PC-3 (cell line): ENCODE measurements at regions of chr22 and their contacts with region 1.

Region 1: GRCh38 chr22:46057762-46058420 is 80.9 kb upstream of the WNT7B start:
- DNase-seq: peak; percentile 84
- ATAC-seq: peak; percentile 31
- H3K4me3 ChIP-seq: peak overlapping the region; percentile 74
- H3K27ac ChIP-seq: peak overlapping the region; percentile 96
- H3K4me1 ChIP-seq: peaks cover 65% of the 10 kb centered on the region
- H3K27me3 ChIP-seq: no peaks in the 10 kb centered on the region
- CTCF ChIP-seq: no peak

Region 2: DNA sequence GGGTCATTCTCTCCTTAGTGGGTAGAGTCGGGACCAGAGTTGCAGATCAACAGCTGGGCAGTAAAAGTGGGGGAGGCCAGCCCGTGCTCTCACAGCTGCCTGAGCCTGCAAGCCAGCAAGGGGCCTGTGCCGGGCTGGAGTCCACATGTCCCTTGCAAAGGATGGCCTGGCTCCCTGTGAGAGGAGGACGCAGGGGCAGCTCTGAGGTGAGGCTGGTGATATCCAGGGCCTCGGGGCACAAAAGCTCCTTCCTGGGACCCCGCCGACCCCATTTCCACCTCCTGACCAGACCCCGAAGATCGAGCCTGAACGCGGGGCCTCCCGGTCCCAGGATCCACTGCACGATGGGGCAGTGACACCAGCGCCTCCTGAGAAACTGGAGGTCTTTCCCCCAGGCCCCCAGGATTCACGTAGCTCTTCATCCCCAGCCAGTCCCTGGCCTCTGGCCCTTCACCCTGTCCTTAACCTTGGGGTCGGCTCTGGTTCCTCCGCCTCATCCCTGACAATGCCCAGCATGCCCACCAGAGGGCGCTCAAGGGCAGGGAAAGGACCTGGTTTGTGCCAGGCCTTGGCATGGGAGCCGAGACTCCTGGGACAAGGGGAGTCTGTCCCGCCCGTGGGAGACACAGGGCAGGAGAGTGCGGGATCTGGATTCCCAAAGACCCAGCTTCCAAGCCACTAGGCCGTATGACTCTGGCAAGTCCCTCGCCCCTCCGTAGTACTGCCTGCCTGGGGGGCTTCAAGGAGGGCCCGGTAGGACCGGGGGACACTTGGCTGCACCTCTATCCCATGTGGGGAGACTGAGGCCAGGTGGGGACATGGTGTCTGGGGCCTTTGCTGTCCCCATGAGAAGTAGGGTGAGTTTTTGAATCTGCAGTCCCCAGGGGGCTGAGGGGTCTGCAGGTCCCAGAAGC is 63.1 kb before region 1 on chr22:
- CTCF ChIA-PET with region 1: no interaction called
- POLR2A ChIA-PET with region 1: no interaction called
- intact Hi-C with region 1: no loop called
- DNase-seq: peak; percentile 77
- ATAC-seq: peak; percentile 67
- H3K4me3 ChIP-seq: no peak overlapping the region
- H3K27ac ChIP-seq: no peak overlapping the region
- H3K4me1 ChIP-seq: peaks cover 17% of the 10 kb centered on the region
- H3K27me3 ChIP-seq: no peaks in the 10 kb centered on the region
- CTCF ChIP-seq: peak; percentile 89

Region 3: DNA sequence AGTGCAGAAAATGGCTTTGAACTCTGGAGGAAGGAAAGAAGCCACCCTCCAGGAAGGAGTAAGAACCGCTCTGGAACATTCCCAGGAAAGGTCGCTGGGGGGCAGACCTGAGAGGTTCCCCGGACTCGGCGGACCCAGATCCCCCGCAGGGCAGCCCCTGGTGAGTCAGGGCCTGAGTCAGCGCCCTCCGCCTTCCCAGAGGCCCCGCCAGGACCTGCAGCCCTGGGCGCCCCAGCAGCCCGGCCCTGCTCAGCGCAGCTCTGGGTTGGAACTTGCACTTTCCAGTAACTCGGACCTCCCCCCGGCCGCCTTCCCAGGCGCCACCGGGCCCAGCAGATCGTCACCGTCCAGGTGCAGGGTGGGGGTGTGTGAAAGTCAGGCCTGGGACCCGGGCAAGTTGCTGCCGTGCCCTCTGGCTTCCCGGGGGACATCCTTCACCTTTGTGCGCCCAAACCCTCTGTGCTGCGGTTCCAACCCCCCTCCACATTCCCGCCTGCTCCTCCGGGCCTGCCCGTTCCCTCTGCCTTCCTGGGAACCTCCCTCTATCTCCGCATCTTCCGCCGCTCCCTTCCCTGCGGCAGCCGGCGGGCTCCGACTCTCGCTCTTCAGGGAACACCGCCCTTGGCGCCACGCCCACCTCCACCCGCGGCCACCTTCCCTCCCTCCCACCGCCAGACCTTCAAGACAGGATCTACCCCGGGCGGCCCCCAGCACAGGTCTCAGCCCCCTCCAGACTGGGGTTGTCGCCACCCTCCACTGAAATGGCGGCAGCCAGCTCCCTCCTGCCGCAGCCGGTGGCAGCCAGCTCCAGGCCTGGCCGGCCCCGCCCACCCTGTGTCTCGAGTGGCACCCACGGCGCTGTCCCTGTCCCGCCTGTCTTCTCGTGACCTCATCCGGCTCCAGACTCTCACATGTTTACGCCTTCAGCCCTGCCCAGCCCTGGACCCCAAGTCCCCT is 44.2 kb before region 1 on chr22:
- CTCF ChIA-PET with region 1: no interaction called
- POLR2A ChIA-PET with region 1: no interaction called
- intact Hi-C with region 1: loop called (anchors 5 kb)
- DNase-seq: peak; percentile 96
- ATAC-seq: peak; percentile 84
- H3K4me3 ChIP-seq: peak overlapping the region; percentile 68
- H3K27ac ChIP-seq: peak overlapping the region; percentile 99
- H3K4me1 ChIP-seq: peaks cover 59% of the 10 kb centered on the region
- H3K27me3 ChIP-seq: no peaks in the 10 kb centered on the region
- CTCF ChIP-seq: peak; percentile 68